Activated naive CD4-positive, alpha-beta T cell treated with anti-CD3 and anti-CD28 coated beads for 36 hours (primary cell): ENCODE measurements at regions of chr16 and their contacts with region 1.

Region 1: GRCh38 chr16:27235055-27235937 is 32.0 kb downstream of the KDM8 start:
- DNase-seq: peak; percentile 89
- H3K4me3 Mint-ChIP-seq: peak overlapping the region; percentile 65
- H3K27ac Mint-ChIP-seq: peak overlapping the region; percentile 98
- H3K4me1 Mint-ChIP-seq: peaks cover 98% of the 10 kb centered on the region
- H3K27me3 Mint-ChIP-seq: no peaks in the 10 kb centered on the region

Region 2: GRCh38 chr16:27169511-27170071 is 65.7 kb before region 1 on chr16:
- CTCF ChIA-PET with region 1: interaction called, 18 read pairs
- intact Hi-C with region 1: loop called (anchors 1 kb)
- DNase-seq: peak; percentile 92
- H3K4me3 Mint-ChIP-seq: no peak overlapping the region
- H3K27ac Mint-ChIP-seq: peak overlapping the region; percentile 87
- H3K4me1 Mint-ChIP-seq: peaks cover 55% of the 10 kb centered on the region
- H3K27me3 Mint-ChIP-seq: no peaks in the 10 kb centered on the region

Region 3: DNA sequence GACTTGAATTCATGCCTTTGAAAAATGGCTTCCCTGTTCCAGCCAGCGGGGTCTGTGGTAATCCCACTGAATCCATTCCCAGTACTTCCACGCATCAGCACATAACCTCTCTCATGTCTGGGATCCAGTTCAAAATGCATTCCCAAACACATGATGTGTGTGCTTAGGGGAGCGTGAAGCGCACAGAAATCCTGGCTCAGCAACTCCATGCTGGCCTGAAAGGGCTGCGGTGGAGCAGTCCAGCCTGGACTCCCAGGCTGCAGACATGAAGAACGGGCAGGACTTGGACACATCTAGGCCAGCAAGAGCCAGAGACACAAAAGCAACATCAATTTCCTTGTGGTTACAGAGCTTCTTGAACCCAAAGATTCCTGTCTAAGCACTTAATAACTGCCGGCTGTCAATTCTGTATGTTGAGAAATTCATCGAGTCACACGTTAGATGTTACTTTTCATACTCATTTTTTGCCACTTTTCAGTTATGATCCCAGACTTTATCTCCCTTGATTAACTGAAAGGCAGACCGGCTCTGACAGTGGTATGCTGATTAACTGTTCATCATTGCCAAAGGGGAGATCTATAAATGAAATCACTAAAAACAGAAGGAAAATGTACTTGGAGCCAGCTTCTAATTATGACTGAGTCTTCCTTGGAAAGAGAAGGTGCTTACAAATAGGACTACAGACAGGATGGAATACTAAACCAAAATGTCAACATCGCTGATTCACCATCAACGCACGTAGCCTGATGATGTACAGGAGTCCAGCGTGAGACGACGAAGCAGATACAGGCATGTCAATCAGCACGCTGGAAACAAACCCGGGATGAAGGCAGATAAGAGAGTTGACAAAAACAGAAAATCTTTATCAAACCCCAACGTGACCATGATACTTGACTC is 10.2 kb after region 1 on chr16:
- CTCF ChIA-PET with region 1: interaction called, 43 read pairs
- intact Hi-C with region 1: loop called (anchors 1 kb)
- DNase-seq: peak; percentile 66
- H3K4me3 Mint-ChIP-seq: no peak overlapping the region
- H3K27ac Mint-ChIP-seq: peak overlapping the region; percentile 38
- H3K4me1 Mint-ChIP-seq: peaks cover 82% of the 10 kb centered on the region
- H3K27me3 Mint-ChIP-seq: no peaks in the 10 kb centered on the region

Region 4: GRCh38 chr16:27273670-27274423 is 38.6 kb after region 1 on chr16:
- CTCF ChIA-PET with region 1: interaction called, 40 read pairs
- intact Hi-C with region 1: loop called (anchors 1 kb)
- DNase-seq: peak; percentile 54
- H3K4me3 Mint-ChIP-seq: peak overlapping the region; percentile 7
- H3K27ac Mint-ChIP-seq: peak overlapping the region; percentile 72
- H3K4me1 Mint-ChIP-seq: peaks cover 65% of the 10 kb centered on the region
- H3K27me3 Mint-ChIP-seq: no peaks in the 10 kb centered on the region

Region 5: DNA sequence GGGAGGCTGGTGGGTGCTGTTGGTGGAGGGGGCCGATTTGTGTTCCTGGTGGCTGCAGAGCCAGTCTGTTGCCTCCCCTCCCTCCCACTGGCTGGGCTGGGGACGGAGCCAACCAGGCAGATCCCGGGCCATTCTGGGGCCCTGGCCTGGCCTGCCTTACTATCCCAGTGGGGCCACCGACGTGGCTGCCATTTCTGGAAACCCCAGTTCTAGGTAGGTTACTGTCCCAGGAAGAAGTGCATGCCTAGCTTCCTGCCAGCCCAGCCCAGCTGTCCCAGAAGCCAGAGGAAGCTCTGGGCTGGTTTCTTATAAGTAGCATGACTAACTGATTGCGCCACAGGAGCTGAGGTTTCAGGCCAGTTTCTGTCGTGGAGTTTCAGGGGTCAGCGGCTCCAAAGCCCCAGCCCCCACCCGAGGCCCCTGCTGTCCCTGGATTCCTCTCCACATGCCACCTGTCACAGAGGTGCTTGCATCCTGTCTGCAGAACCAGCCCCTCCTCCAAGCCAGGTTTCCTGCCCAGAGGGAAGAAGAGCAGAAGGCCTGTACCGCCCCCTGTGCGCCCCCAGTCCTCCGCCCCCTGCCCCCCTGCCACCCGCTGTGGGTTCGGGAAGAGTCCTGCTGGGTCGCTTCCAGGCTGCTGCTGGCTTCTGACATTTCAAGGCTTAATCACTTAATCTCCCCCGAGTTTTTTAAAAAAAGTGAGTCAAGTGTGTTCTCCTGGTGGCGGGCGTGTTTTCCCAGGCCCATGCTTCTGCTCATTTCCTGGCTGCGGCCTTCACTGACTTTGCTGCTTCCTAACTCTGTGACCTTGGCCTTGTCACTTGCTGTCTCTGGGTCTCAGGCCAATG is 91.7 kb after region 1 on chr16:
- CTCF ChIA-PET with region 1: interaction called, 10 read pairs
- intact Hi-C with region 1: loop called (anchors 1 kb)
- DNase-seq: peak; percentile 69
- H3K4me3 Mint-ChIP-seq: peak overlapping the region; percentile 55
- H3K27ac Mint-ChIP-seq: peak overlapping the region; percentile 91
- H3K4me1 Mint-ChIP-seq: peaks cover 84% of the 10 kb centered on the region
- H3K27me3 Mint-ChIP-seq: no peaks in the 10 kb centered on the region

Region 6: GRCh38 chr16:27408012-27408601 is 172.8 kb after region 1 on chr16:
- CTCF ChIA-PET with region 1: interaction called, 11 read pairs
- intact Hi-C with region 1: loop called (anchors 1 kb)
- DNase-seq: peak; percentile 78
- H3K4me3 Mint-ChIP-seq: peak overlapping the region; percentile 98
- H3K27ac Mint-ChIP-seq: peak overlapping the region; percentile 100
- H3K4me1 Mint-ChIP-seq: peaks cover 65% of the 10 kb centered on the region
- H3K27me3 Mint-ChIP-seq: no peaks in the 10 kb centered on the region